ENCODE measurements at regions of chr22 and their contacts with region 1.

Region 1: GRCh38 chr22:49917974-49918910 is at the starts of genes ALG12 and CRELD2:
- DNase-seq: peak; percentile 91
- ATAC-seq: peak; percentile 94
- H3K4me3 ChIP-seq: peak within 1 kb of the TSS; percentile 78
- H3K27ac ChIP-seq: peak within 1 kb of the TSS; percentile 65
- H3K4me1 ChIP-seq: peaks cover 12% of the 10 kb centered on the region
- H3K27me3 ChIP-seq: no peaks in the 10 kb centered on the region
- CTCF ChIP-seq: no peak
- total RNA-seq, gene ALG12: 10.7 and 12.1 TPM in 2 replicates
- total RNA-seq, gene CRELD2: 71.3 and 85.6 TPM in 2 replicates

Region 2: GRCh38 chr22:49767355-49768062 is 150.7 kb before region 1 on chr22:
- CTCF ChIA-PET with region 1: interaction called, 5 read pairs
- POLR2A ChIA-PET with region 1: no interaction called
- intact Hi-C with region 1: loop called (anchors 1 kb)
- DNase-seq: peak; percentile 59
- ATAC-seq: peak; percentile 63
- H3K4me3 ChIP-seq: no peak overlapping the region
- H3K27ac ChIP-seq: no peak overlapping the region
- H3K4me1 ChIP-seq: no peaks in the 10 kb centered on the region
- H3K27me3 ChIP-seq: no peaks in the 10 kb centered on the region
- CTCF ChIP-seq: peak; percentile 80